Heart right ventricle (tissue), 16 donors: ENCODE measurements at regions of chr20 and their contacts with region 1.

Region 1: GRCh38 chr20:53857723-53858236 is 212.6 kb downstream of the BCAS1 start:
- DNase-seq: no peak
- ATAC-seq: peak in 2 of 8 donors; percentile 45 to 53
- H3K4me3 ChIP-seq: no peak overlapping the region
- H3K27ac ChIP-seq: peak overlapping the region in 3 of 10 donors; percentile 5 to 51 (median 7)
- H3K4me1 ChIP-seq: peaks cover 0 to 39% (median 17%) of the 10 kb centered on the region in 9 donors
- H3K27me3 ChIP-seq: no peaks in the 10 kb centered on the region
- CTCF ChIP-seq: no peak

Region 2: DNA sequence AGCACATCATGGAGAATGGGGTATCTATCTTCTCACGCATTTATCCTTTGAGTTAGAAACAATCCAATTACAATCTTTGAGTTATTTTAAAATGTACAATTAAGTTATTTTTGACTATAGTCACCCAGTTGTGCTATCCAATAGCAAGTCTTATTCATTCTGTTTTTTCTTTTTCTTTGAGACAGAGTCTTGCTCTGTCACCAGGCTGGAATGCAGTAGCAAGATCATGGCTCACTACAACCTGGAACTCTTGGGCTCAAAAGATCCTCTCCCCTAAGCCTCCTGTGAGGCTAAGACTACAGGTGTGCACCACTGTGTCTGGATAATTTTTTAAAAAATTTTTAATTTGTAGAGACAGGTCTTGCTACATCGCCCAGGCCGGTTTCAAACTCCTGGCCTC is 62.6 kb before region 1 on chr20:
- intact Hi-C with region 1: loop called in 1 of 10 experiments (anchors 10 kb)
- DNase-seq: no peak
- ATAC-seq: no peak
- H3K4me3 ChIP-seq: no peak overlapping the region
- H3K27ac ChIP-seq: no peak overlapping the region
- H3K4me1 ChIP-seq: peaks cover 0 to 15% (median 0%) of the 10 kb centered on the region in 9 donors
- H3K27me3 ChIP-seq: no peaks in the 10 kb centered on the region
- CTCF ChIP-seq: no peak